RWPE1 (cell line): ENCODE measurements at regions of chr1 and their contacts with region 1.

Region 1: DNA sequence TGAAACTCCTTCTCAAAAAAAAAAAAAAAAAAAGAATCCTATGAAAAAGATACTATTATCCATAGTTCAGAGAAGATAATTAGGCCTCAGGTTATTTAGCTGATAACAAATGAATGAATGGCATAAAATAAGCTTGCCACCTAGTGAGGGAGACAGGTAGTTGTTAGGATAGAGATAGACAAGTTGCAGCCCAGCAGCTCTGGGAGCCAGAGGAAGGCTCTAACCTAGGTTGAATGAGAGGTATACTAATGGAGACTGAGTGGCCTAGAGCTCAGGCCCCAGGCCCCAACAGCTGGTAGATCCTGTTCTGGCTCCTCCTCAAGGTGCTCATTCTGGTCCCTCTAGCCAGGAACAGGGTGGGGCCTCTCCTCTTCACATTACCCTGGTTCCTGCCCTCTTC is 20.6 kb upstream of the RSPO1 start:
- DNase-seq: no peak
- H3K27ac ChIP-seq: no peak overlapping the region
- CTCF ChIP-seq: no peak

Region 2: DNA sequence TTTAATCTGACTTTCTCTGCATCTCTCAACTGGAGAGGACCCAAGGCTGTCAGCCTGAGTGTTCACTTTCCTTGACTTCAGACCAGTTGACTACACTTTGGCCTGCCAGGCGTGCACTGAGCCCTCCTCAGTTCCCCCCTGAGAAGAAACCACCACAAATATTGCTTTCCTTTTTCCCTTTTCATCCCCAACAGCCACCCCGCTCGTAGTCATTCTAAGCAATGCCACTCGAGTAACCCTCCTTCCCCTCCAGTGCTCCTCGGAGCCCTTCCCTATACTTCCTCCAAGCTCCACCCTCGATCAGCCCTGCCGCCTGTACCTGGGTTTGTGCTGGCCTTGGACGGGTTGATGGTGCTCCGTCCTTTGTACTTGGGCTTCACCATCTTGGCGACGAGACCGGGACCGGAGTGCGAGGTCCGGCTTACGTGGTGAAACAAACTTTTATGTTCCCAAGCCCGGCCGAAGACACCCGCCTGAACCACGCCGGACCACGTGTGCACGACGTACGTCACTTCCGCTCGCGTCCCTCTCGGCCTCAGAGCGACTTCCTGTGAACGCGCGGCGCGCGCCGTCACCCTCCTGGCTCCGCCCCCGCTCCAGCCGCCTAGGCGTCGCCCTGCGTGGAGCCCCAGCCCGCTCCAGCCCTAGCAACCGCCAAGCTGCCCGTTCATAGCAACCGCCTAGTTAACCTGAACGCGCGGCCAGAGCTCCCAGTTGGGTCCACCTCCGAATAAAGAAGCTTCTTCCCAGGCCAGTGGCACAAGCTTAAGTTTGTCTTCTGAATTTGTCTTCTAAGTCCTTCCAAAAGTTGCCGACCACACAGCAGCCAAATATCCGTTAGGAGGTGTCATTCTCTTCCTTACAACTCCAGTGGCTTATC is 59.6 kb before region 1 on chr1 and contains the start of gene GNL2:
- CTCF ChIA-PET with region 1: no interaction called
- POLR2A ChIA-PET with region 1: no interaction called
- DNase-seq: peak; percentile 97
- H3K27ac ChIP-seq: peak within 1 kb of the TSS; percentile 65
- CTCF ChIP-seq: no peak

Region 3: DNA sequence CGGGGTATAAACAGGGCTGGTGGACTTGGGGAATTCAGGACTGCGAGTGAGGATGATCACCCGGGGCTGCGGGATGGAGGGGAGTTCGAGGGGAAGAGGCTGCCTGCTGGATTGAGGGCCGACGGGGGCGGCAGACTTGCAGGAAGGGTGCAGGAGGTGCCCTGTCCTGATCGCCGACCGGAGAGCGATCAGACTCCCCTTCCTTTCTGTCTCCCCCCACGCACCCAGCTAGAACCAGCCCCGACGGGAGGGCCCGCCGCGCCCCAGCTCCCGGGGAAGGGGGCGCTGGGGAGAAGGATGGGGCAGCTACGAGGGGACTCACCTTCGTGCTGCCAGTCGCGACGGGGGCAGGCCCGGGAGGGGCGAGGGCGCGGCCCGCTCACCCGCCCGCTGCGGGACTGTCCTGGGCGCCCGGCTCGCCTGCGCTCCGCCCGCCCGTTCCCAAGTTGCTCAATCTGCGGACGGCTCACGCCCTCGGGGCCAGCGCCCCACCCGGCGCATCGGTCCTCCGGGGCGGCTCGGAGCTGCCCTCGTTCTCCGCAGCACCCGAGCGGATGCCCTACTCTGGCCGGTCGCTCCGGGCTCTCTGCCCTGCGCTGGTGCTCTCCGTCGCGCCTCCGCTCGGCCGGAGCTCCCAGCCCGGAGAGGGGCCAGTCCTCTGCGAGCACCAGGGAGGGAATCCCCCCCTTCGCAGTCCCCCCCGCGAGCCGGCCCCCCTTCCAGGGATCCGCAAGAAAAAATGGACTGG is 20.9 kb before region 1 on chr1 and contains the start of gene RSPO1:
- CTCF ChIA-PET with region 1: no interaction called
- POLR2A ChIA-PET with region 1: interaction called, 12 read pairs
- DNase-seq: peak; percentile 24
- H3K27ac ChIP-seq: no peak within 1 kb of the TSS
- CTCF ChIP-seq: no peak